ENCODE measurements at regions of chr3 and their contacts with region 1.

Region 1: GRCh38 chr3:38969317-38970235 is 82.2 kb downstream of the SCN11A start:
- DNase-seq: no peak
- ATAC-seq: no peak
- H3K4me3 Mint-ChIP-seq: no peak overlapping the region
- H3K27ac Mint-ChIP-seq: no peak overlapping the region
- H3K4me1 Mint-ChIP-seq: no peaks in the 10 kb centered on the region
- H3K27me3 Mint-ChIP-seq: peaks cover 13% of the 10 kb centered on the region
- CTCF ChIP-seq: no peak

Region 2: GRCh38 chr3:38985581-38985980 is 16.0 kb after region 1 on chr3:
- CTCF ChIA-PET with region 1: no interaction called
- POLR2A ChIA-PET with region 1: interaction called, 10 read pairs
- intact Hi-C with region 1: no loop called
- DNase-seq: no peak
- ATAC-seq: no peak
- H3K4me3 Mint-ChIP-seq: no peak overlapping the region
- H3K27ac Mint-ChIP-seq: no peak overlapping the region
- H3K4me1 Mint-ChIP-seq: no peaks in the 10 kb centered on the region
- H3K27me3 Mint-ChIP-seq: peaks cover 14% of the 10 kb centered on the region
- CTCF ChIP-seq: no peak

Region 3: DNA sequence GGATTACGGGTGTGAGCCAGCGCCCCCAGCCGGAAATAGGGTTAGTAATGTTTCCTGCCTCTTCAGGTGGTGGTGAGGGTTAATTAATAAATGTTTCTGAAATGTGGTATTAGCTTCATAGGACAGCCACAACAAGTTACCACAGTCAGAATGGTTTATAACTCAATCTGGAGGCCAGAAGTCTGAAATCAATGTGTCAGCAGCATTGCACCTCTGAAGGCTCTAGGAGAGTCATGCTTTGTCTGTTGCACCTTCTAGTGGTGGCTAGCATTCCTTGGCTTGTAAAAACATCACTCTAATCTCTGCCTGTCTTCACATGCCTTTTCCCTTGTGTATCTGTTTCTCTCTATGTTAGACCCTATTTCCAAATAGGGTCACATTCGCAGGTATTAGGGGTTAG is 429.1 kb after region 1 on chr3:
- CTCF ChIA-PET with region 1: no interaction called
- POLR2A ChIA-PET with region 1: no interaction called
- intact Hi-C with region 1: no loop called
- DNase-seq: no peak
- ATAC-seq: no peak
- H3K4me3 Mint-ChIP-seq: no peak overlapping the region
- H3K27ac Mint-ChIP-seq: no peak overlapping the region
- H3K4me1 Mint-ChIP-seq: no peaks in the 10 kb centered on the region
- H3K27me3 Mint-ChIP-seq: no peaks in the 10 kb centered on the region
- CTCF ChIP-seq: no peak

Measured in activated B cell treated with CpG ODN at 0.5 μM for 24 hours (primary cell).